ENCODE measurements at regions of chrX and their contacts with region 1.

Region 1: DNA sequence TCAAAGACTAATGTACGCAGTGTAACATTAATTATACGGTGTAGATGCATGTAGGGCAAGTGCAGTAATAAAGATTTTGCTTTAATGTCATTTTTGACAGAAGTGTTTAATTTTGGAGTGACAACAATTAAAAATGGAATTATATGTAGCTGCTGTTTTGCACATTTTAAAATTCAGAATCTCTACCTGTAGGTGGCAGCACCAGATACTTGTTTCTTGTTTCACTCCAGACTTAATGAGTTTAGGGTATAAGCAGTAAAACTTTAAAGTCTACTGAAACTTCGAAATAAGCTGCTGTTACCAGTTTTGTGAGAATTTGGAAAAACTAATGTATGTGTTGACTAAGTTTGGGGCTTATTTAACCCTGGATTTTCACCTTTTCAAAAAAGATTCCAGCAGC is 144.9 kb downstream of the POLA1 start:
- DNase-seq: peak; percentile 72
- H3K4me3 ChIP-seq: no peak overlapping the region
- H3K27ac ChIP-seq: no peak overlapping the region
- H3K4me1 ChIP-seq: peaks cover 41% of the 10 kb centered on the region
- H3K27me3 ChIP-seq: no peaks in the 10 kb centered on the region
- CTCF ChIP-seq: peak; percentile 72

Region 2: GRCh38 chrX:24996096-24996709 is 157.6 kb after region 1 on chrX:
- CTCF ChIA-PET with region 1: no interaction called
- POLR2A ChIA-PET with region 1: no interaction called
- intact Hi-C with region 1: loop called (anchors 5 kb)
- DNase-seq: no peak
- H3K4me3 ChIP-seq: no peak overlapping the region
- H3K27ac ChIP-seq: no peak overlapping the region
- H3K4me1 ChIP-seq: peaks cover 22% of the 10 kb centered on the region
- H3K27me3 ChIP-seq: peaks cover 14% of the 10 kb centered on the region
- CTCF ChIP-seq: no peak

Region 3: DNA sequence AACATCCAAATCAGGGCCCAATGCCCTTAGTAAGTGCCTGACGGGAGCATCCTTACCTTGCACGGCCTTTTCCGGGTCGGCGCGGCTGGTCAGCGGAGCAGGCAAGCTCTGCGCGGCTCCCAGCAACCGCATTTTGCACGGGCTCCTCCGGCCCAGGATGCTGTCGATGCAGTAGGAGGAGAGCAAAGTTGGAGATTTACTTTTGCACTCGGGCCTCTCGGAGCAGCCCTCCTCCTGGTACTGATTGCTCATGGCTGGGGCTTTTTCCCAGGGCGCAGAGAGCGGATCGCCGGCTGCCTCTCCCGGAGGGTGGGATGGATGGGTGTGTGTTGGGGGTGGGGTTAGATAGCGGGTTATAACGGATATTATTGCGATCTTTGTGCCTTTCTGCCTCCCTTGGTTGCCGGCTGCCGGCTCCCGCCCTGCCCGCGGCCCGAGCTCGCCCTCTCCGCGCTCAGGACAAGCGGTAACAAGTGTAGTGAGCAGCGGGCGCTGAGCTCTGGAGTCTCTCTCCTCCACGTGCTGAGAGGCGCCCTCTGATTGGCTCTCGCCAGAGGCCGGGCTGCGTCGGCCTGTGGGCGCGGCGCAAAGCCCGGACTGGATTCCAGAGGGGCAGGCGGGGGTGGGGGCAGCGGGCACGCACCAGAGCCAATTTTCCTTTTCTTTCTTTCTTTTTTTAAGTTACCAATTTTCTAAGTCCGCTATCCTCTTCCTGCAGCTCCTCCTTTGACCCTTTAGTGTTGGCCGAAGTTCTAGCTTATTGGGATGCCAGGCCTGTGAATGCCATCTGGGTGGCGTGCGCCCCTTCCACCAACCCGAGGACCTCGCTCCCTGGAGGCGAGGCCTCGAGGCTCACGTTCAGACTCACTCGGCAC is 177.1 kb after region 1 on chrX and contains the start of gene ARX:
- CTCF ChIA-PET with region 1: interaction called, 8 read pairs
- POLR2A ChIA-PET with region 1: no interaction called
- intact Hi-C with region 1: loop called (anchors 5 kb)
- DNase-seq: peak; percentile 91
- H3K4me3 ChIP-seq: peak within 1 kb of the TSS; percentile 59
- H3K27ac ChIP-seq: peak within 1 kb of the TSS; percentile 66
- H3K4me1 ChIP-seq: peaks cover 31% of the 10 kb centered on the region
- H3K27me3 ChIP-seq: no peaks in the 10 kb centered on the region
- CTCF ChIP-seq: no peak
- total RNA-seq, gene ARX: 32.0 and 44.4 TPM in 2 replicates

Region 4: GRCh38 chrX:25067271-25068172 is 228.9 kb after region 1 on chrX:
- CTCF ChIA-PET with region 1: no interaction called
- POLR2A ChIA-PET with region 1: no interaction called
- intact Hi-C with region 1: loop called (anchors 5 kb)
- DNase-seq: peak; percentile 74
- H3K4me3 ChIP-seq: no peak overlapping the region
- H3K27ac ChIP-seq: peak overlapping the region; percentile 97
- H3K4me1 ChIP-seq: peaks cover 50% of the 10 kb centered on the region
- H3K27me3 ChIP-seq: no peaks in the 10 kb centered on the region
- CTCF ChIP-seq: peak; percentile 39; the same call in 1 of the 2 replicates

Region 5: DNA sequence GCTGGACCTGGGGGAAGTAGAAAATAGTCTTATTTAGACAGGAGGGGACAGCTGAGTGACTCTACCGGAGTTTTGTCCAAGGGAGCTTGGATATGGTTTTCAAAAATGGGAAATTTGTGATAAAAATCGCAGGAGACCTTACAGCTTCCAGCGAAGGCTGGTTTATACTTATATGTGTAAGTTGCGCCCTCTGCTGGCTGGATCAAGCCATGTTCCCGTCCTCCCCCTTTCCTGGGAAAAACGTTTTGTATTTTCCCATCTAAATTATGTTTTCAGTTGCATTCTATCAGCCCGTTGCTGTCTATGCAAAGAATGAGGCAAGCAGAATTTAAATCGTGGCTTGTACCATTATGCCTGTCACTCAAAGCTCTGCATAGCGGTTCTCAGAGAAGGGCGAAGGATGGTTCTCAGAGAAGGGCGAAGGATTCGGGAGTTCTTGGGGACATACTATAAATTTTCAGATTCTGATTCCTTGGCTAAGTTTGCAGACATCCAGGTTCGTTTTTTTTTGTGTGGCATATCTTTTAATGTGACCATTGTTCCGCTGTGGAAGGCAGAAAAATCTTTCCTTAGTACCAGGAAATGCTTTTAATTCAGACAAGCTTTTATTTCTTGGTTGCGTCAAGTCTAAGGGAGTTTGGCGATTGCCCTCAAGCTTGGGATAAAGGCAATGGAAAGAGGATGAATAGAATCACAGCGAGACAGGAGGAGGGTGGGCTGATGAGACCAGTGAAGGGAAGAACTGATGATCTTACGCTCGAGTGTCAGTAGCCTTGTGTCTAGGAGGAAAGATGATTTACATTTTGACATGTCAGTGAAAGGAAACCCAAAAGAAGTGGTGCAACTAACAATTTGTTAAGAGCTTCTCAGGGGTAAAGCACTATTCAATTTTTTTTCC is 305.7 kb after region 1 on chrX:
- CTCF ChIA-PET with region 1: interaction called, 37 read pairs
- POLR2A ChIA-PET with region 1: no interaction called
- intact Hi-C with region 1: loop called (anchors 2 kb)
- DNase-seq: peak; percentile 89
- H3K4me3 ChIP-seq: peak overlapping the region; percentile 38
- H3K27ac ChIP-seq: peak overlapping the region; percentile 85
- H3K4me1 ChIP-seq: peaks cover 42% of the 10 kb centered on the region
- H3K27me3 ChIP-seq: no peaks in the 10 kb centered on the region
- CTCF ChIP-seq: peak; percentile 93

Region 6: DNA sequence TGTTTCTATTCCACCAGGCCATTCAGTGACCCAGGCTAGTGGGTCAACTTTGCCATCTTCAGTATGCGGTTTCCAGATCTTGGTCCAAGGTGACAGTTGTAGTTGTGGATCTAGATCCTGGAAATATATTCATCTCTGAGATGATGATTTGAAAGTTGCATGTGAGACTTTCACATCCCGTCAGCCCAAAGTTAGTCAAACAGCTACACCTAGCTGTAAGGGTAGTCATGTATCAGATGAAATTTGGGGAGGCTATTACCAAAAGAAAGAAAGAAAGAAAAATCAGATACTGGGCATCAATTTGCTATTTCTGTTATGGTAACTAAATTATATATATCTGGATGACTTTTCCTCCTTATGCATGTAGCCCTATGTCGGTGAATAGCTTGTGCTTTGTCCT is 436.5 kb after region 1 on chrX:
- CTCF ChIA-PET with region 1: no interaction called
- POLR2A ChIA-PET with region 1: no interaction called
- intact Hi-C with region 1: loop called (anchors 10 kb)
- DNase-seq: peak; percentile 43
- H3K4me3 ChIP-seq: no peak overlapping the region
- H3K27ac ChIP-seq: no peak overlapping the region
- H3K4me1 ChIP-seq: no peaks in the 10 kb centered on the region
- H3K27me3 ChIP-seq: no peaks in the 10 kb centered on the region
- CTCF ChIP-seq: peak; percentile 55

Region 7: GRCh38 chrX:25442499-25442898 is 603.9 kb after region 1 on chrX:
- CTCF ChIA-PET with region 1: no interaction called
- POLR2A ChIA-PET with region 1: interaction called, 4 read pairs
- intact Hi-C with region 1: loop called (anchors 10 kb)
- DNase-seq: peak; percentile 35
- H3K4me3 ChIP-seq: no peak overlapping the region
- H3K27ac ChIP-seq: no peak overlapping the region
- H3K4me1 ChIP-seq: no peaks in the 10 kb centered on the region
- H3K27me3 ChIP-seq: peaks cover 30% of the 10 kb centered on the region
- CTCF ChIP-seq: peak; percentile 57